Activated naive CD8-positive, alpha-beta T cell treated with anti-CD3 and anti-CD28 coated beads, Interleukin-2, amount 10 ng/mL, durations not matched to agents 7 days and 5 days (primary cell): ENCODE measurements at regions of chr11 and their contacts with region 1.

Region 1: GRCh38 chr11:1309498-1310317 is at the start of gene TOLLIP:
- DNase-seq: peak; percentile 100
- ATAC-seq: peak; percentile 92
- H3K4me3 Mint-ChIP-seq: peak within 1 kb of the TSS; percentile 79
- H3K27ac Mint-ChIP-seq: peak within 1 kb of the TSS; percentile 94
- H3K4me1 Mint-ChIP-seq: peaks cover 28% of the 10 kb centered on the region
- H3K27me3 Mint-ChIP-seq: peaks cover 7% of the 10 kb centered on the region
- total RNA-seq, gene TOLLIP: 36.7 to 37.5 TPM

Region 2: DNA sequence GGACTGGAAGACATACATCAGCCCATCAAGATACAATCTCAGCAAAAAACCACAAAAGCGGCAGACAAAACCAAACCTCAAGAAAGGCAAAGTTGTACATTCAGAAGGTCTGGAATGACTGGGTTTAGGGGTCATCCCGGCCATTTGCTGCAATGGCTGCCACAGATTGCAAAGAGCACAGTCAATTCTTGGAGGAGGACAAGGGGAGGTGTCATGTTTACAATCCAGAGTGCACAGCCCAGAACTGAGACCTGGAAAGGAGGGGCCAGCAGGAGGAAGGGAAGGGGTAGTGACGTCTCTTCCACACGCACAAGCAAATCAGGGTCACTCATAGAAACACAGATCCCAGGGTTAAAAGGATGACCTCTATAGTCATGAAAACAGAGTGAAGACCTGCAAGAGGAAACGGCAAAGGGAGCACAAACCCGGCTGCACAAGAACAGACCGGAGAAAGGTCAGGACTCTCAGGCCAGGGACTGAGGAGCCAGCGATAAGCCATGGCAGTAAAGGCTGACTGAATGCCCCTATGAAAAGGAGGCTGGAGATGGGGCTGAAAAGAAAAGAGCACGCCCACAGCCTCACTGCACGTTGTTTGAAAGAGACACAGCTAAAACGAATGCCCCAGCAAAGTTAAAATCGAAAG is 170.1 kb before region 1 on chr11:
- POLR2A ChIA-PET with region 1: no interaction called
- DNase-seq: no peak
- ATAC-seq: no peak
- H3K4me3 Mint-ChIP-seq: no peak overlapping the region
- H3K27ac Mint-ChIP-seq: no peak overlapping the region
- H3K4me1 Mint-ChIP-seq: peaks cover 2% of the 10 kb centered on the region
- H3K27me3 Mint-ChIP-seq: peaks cover 12% of the 10 kb centered on the region

Region 3: GRCh38 chr11:1262172-1263006 is 47.3 kb before region 1 on chr11:
- POLR2A ChIA-PET with region 1: interaction called, 18 read pairs
- DNase-seq: peak; percentile 88
- ATAC-seq: peak; percentile 84
- H3K4me3 Mint-ChIP-seq: peak overlapping the region; percentile 88
- H3K27ac Mint-ChIP-seq: peak overlapping the region; percentile 98
- H3K4me1 Mint-ChIP-seq: peaks cover 6% of the 10 kb centered on the region
- H3K27me3 Mint-ChIP-seq: no peaks in the 10 kb centered on the region

Region 4: GRCh38 chr11:1335811-1336761 is 26.4 kb after region 1 on chr11:
- POLR2A ChIA-PET with region 1: interaction called, 15 read pairs
- DNase-seq: peak; percentile 72
- ATAC-seq: peak; percentile 82
- H3K4me3 Mint-ChIP-seq: peak overlapping the region; percentile 84
- H3K27ac Mint-ChIP-seq: peak overlapping the region; percentile 85
- H3K4me1 Mint-ChIP-seq: peaks cover 4% of the 10 kb centered on the region
- H3K27me3 Mint-ChIP-seq: peaks cover 10% of the 10 kb centered on the region

Region 5: DNA sequence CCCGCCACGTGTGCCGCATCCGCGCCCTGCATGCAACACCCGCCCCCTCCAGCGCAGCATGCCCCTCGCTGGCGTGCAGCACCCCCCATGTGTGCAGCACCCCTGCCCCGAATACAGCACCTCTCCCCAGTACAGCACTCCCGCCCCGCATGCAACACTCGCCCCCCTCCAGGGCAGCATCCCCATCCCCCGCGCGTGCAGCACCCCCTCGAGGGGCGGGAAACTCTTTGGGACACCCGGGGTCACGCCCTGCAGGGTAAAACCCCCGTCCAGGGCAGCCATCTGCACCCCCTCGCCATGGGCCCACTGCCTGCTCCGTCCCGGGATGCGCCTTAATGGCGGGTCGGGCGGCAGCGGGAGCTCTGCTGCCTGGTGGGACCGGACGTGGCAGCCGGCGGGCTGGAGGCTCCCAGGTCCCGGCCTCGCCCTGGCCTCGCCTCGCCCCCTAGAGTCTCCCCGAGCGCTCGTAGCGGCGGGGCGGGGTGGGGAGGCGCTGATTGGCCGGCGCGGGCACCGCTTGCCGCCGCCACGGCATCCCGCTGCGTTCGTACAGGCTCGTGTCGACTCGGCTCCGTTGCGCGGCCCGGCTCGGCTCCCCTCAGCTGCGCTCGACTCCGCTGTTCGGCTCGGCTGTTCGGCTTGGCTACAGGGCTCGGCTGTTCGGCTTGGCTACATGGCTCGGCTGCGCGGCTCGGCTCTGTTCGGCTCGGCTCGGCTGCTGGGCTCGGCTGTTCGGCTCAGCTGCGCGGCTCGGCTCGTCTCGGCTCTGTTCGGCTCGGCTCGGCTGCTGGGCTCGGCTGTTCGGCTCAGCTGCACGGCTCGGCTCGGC is 79.6 kb after region 1 on chr11:
- POLR2A ChIA-PET with region 1: interaction called, 10 read pairs
- DNase-seq: peak; percentile 93
- ATAC-seq: peak; percentile 98
- H3K4me3 Mint-ChIP-seq: peak overlapping the region; percentile 60
- H3K27ac Mint-ChIP-seq: no peak overlapping the region
- H3K4me1 Mint-ChIP-seq: peaks cover 5% of the 10 kb centered on the region
- H3K27me3 Mint-ChIP-seq: peaks cover 21% of the 10 kb centered on the region